Activated CD4-positive, alpha-beta memory T cell treated with anti-CD3 and anti-CD28 coated beads for 36 hours (primary cell): ENCODE measurements at regions of chr15 and their contacts with region 1.

Region 1: DNA sequence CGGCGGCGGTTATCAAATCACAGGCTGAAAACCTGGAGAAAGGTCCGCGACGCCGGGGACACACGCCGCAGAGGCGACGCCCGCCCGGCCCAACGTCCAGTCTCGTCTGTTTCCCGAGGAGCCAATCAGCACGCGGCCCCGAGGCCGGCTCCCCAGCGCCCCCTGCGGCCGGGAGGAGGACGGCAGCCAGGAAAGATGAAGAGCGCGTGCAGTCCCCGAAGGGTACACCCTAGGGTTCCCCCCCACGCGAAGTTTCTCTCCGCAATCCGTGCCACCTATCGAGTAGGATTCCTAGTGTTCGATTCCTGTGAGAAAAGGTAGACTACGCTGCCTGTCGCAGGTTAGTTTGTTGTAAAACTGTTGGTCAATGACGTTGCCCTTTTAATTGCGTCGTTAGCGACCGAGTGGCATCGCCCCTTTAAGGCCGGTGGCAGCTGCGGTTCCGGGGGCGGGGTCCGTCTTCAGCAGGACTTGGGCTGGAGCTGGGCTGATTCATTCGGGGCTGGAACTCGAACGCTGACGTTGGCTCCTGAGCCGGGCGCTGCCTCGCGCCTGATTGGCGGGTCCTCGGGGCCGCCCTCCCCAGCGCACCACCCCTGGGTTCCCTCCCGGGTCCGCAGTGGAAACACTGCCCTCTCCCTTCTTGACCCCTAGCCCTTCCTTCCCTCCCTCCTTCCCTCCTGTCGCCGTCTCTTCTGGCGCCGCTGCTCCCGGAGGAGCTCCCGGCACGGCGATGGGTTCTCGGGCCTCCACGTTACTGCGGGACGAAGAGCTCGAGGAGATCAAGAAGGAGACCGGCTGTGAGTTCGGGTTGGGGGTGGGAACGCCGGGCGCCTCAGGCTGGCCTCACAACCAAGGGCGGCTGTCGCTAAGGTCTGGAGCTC is at the starts of genes CHP1 and EXD1:
- DNase-seq: peak; percentile 98
- H3K4me3 Mint-ChIP-seq: peak within 1 kb of the TSS; percentile 89
- H3K27ac Mint-ChIP-seq: peak within 1 kb of the TSS; percentile 81
- H3K4me1 Mint-ChIP-seq: peaks cover 30% of the 10 kb centered on the region
- H3K27me3 Mint-ChIP-seq: no peaks in the 10 kb centered on the region
- total RNA-seq, gene CHP1: 46.3 to 48.7 TPM
- total RNA-seq, gene EXD1: not detected

Region 2: DNA sequence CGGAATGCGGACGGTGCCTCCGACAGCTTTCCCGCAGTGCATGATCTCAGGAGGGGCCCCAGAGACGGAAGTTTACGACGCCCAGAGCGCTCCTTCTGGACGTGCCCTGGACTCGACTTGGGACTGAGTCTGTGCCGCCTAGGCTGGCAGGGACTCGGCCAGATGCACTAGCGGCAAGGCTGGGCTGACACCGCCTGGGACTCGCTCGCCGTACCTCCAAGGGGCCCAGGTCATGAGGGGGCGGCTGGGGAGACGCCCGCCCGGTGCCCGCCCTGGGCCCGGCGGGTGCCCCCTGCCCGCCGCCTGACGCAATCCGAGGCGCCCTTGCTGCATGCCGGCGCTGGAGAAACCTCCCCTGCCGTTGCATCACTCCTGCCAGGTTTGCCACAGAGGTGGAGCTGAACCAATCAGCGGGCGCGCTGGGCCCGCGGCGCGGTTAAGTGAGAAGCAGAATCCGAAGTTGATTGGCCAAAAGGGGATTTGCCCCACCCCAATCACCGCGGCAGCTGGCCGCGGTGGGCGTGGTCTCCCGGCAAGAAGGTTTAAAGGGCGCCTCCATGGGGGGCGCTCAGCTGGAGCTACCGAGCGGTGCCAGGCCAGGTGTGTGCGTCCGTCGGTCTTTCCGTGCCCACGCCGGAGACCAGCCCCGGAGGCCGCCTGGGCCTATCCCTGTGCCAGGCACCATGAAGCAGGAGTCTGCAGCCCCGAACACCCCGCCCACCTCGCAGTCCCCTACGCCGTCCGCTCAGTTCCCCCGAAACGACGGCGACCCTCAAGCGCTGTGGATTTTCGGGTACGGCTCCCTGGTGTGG is 277.8 kb before region 1 on chr15 and contains the start of gene CHAC1:
- CTCF ChIA-PET with region 1: interaction called, 4 read pairs
- POLR2A ChIA-PET with region 1: interaction called, 7 read pairs
- intact Hi-C with region 1: loop called (anchors 2 kb)
- DNase-seq: peak; percentile 98
- H3K4me3 Mint-ChIP-seq: peak within 1 kb of the TSS; percentile 95
- H3K27ac Mint-ChIP-seq: peak within 1 kb of the TSS; percentile 89
- H3K4me1 Mint-ChIP-seq: peaks cover 38% of the 10 kb centered on the region
- H3K27me3 Mint-ChIP-seq: no peaks in the 10 kb centered on the region
- total RNA-seq, gene CHAC1: 21.6 to 22.3 TPM

Region 3: GRCh38 chr15:41154412-41154811 is 76.5 kb before region 1 on chr15:
- CTCF ChIA-PET with region 1: interaction called, 3 read pairs
- POLR2A ChIA-PET with region 1: no interaction called
- intact Hi-C with region 1: loop called (anchors 10 kb)
- DNase-seq: no peak
- H3K4me3 Mint-ChIP-seq: no peak overlapping the region
- H3K27ac Mint-ChIP-seq: no peak overlapping the region
- H3K4me1 Mint-ChIP-seq: peaks cover 15% of the 10 kb centered on the region
- H3K27me3 Mint-ChIP-seq: no peaks in the 10 kb centered on the region

Region 4: DNA sequence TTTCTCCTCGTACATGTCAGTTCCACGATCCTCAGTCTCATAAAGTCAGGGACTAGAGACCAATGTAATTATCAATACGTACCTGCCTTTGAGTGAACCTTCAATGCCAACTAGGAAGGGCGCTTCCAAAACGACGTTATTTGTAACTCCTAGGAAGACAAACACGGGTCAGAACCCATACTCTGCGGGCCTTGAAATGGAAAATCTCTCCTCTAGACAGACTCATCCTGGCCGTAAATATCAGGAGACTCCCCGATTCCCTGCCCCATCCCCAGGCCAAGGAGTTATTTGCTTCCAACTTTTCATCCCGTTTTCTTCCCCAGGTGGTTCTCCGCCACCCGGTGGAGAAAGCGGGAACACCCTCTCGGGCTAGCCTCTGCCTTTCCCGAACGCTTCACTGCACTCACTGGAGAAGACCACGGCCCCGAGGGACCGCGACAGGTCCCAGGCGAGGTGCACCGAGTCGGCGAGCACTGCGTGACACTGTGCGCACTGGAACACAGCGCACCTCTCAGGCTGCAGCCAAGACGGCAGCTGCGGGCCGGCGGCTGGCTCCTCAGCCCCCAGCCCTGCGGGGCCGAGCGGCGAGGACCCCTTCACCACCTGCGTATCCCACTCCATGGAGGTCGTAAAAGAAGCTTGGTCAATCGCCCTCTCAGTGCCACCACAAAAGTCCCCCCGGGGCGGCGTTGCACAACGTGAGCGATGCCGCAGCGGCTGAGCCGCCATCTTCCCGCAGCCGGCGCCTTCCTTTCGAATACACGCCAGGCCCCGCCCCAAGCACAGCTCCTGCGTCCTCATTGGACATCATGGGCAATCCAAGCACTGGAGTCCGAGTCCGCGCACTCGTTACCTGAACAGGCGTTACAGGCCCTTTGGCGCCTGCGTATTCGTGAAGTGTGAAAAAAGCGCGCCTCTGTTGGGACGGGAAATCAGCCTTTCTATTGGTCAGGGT is 101.2 kb after region 1 on chr15 and contains the start of gene OIP5:
- CTCF ChIA-PET with region 1: interaction called, 8 read pairs
- POLR2A ChIA-PET with region 1: interaction called, 3 read pairs
- intact Hi-C with region 1: loop called (anchors 1 kb)
- DNase-seq: peak; percentile 99
- H3K4me3 Mint-ChIP-seq: peak within 1 kb of the TSS; percentile 99
- H3K27ac Mint-ChIP-seq: peak within 1 kb of the TSS; percentile 97
- H3K4me1 Mint-ChIP-seq: peaks cover 23% of the 10 kb centered on the region
- H3K27me3 Mint-ChIP-seq: no peaks in the 10 kb centered on the region
- total RNA-seq, gene OIP5: 11.1 to 13.0 TPM